Posterior vena cava (tissue), 2 donors: ENCODE measurements at regions of chr7 and their contacts with region 1.

Region 1: GRCh38 chr7:138002096-138002827 is 376 bp upstream of the CREB3L2 start:
- DNase-seq: peak; percentile 100

Region 2: DNA sequence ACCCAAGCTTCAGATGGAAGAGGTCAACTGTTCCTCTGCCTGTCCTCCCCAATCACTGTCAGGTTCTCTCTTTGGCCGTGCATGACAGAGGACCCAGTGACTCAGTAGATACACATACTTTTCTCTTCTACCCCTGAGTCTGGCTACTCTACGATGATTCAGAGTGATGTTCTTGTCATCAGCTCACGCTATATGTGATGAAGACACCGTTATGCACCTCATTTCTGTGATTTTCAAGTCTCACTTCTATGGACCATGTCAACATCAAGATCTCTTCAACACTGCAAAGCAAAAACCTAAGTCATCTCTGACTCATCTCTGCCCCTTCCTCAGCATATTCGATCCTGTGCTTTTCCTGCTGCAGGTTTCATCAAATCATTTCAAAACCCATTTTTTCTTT is 78.9 kb before region 1 on chr7:
- intact Hi-C with region 1: loop called in 1 of 2 experiments (anchors 1 kb)
- DNase-seq: no peak

Region 3: DNA sequence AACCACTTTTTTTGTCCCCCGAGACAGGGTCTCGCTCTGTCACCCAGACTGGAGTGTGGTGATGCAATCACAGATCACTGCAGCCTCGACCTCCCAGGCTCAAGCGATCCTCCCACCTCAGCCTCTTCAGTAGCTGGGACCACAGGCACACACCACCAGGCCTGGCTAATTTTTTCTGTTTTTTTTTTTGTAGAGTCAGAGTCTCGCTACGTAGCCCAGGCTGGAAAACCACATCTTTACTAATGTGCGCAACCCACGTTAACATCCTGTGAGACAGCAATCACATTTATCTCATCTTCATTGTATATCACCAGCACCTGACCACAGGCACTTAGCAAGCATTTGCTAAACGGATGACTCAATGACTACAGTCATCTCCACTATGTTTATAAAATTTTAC is 873.5 kb after region 1 on chr7:
- intact Hi-C with region 1: loop called in 1 of 2 experiments (anchors 5 kb)
- DNase-seq: no peak